HEK293 (cell line): ENCODE measurements at regions of chr19 and their contacts with region 1.

Region 1: DNA sequence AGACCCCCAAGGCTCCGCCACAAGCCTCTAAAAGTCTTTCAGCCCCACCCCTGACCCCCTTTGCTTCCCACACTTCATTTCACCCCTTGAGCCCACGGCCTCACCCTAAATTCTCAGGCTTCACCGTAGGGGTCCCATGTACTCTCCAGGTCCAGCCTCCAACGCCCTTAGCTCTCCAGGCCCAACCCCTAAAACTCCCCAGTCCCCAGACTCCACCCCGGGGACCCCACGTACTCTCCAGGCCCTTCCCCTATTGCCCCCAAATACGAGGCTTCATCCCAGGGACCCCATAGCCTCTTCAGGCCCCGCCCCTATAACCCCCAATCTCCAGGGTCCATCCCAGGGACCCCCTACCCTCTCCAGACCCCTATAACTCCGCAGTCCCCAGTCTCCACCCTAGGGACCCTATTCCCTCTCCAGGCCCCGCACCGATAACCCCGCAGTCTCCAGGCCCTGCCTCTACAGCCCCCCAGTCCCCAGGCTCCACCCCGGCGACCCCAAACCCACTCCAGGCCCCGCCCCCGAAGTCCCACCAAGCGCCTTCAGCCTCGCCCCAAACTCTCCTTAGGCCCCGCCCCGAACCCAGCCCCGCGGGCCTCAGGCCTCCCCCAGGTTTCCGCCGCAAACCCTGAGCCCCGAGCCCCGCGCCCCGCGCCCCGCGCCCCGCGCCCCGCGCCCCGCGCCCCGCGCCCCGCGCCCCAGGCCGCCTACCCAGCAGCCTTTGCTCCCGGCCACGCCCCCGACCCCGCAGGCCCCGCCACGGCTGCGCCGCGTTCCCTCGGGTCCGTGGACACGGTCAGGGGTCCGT is 540 bp downstream of the MED16 start:
- H3K4me3 ChIP-seq: peak overlapping the region; percentile 91
- H3K27ac ChIP-seq: peak overlapping the region; percentile 96
- H3K4me1 ChIP-seq: no peaks in the 10 kb centered on the region
- CTCF ChIP-seq: no peak

Region 2: GRCh38 chr19:741506-742131 is 150.8 kb before region 1 on chr19:
- CTCF ChIA-PET with region 1: no interaction called
- POLR2A ChIA-PET with region 1: no interaction called
- H3K4me3 ChIP-seq: no peak overlapping the region
- H3K27ac ChIP-seq: no peak overlapping the region
- H3K4me1 ChIP-seq: no peaks in the 10 kb centered on the region
- CTCF ChIP-seq: no peak

Region 3: GRCh38 chr19:835210-835810 is 57.1 kb before region 1 on chr19:
- CTCF ChIA-PET with region 1: no interaction called
- POLR2A ChIA-PET with region 1: no interaction called
- H3K4me3 ChIP-seq: no peak overlapping the region
- H3K27ac ChIP-seq: no peak overlapping the region
- H3K4me1 ChIP-seq: no peaks in the 10 kb centered on the region
- CTCF ChIP-seq: no peak

Region 4: GRCh38 chr19:907183-907853 is 14.9 kb after region 1 on chr19:
- CTCF ChIA-PET with region 1: no interaction called
- POLR2A ChIA-PET with region 1: interaction called, 13 read pairs
- H3K4me3 ChIP-seq: no peak overlapping the region
- H3K27ac ChIP-seq: no peak overlapping the region
- H3K4me1 ChIP-seq: no peaks in the 10 kb centered on the region; the same call in 1 of the 2 replicates
- CTCF ChIP-seq: no peak